Calu3 (cell line): ENCODE measurements at regions of chr4 and their contacts with region 1.

Region 1: GRCh38 chr4:106629268-106629625 is 260.7 kb upstream of the GIMD1 start:
- DNase-seq: no peak
- H3K4me3 Mint-ChIP-seq: no peak overlapping the region
- H3K27ac Mint-ChIP-seq: no peak overlapping the region
- H3K4me1 Mint-ChIP-seq: no peaks in the 10 kb centered on the region
- H3K27me3 Mint-ChIP-seq: no peaks in the 10 kb centered on the region
- CTCF ChIP-seq: no peak

Region 2: GRCh38 chr4:106659371-106659770 is 30.1 kb after region 1 on chr4:
- CTCF ChIA-PET with region 1: interaction called, 10 read pairs
- intact Hi-C with region 1: no loop called
- DNase-seq: no peak
- H3K4me3 Mint-ChIP-seq: no peak overlapping the region
- H3K27ac Mint-ChIP-seq: no peak overlapping the region
- H3K4me1 Mint-ChIP-seq: no peaks in the 10 kb centered on the region
- H3K27me3 Mint-ChIP-seq: no peaks in the 10 kb centered on the region
- CTCF ChIP-seq: no peak

Region 3: GRCh38 chr4:107330915-107331314 is 701.7 kb after region 1 on chr4:
- CTCF ChIA-PET with region 1: no interaction called
- intact Hi-C with region 1: no loop called
- DNase-seq: no peak
- H3K4me3 Mint-ChIP-seq: no peak overlapping the region
- H3K27ac Mint-ChIP-seq: no peak overlapping the region
- H3K4me1 Mint-ChIP-seq: peaks cover 11% of the 10 kb centered on the region
- H3K27me3 Mint-ChIP-seq: no peaks in the 10 kb centered on the region
- CTCF ChIP-seq: no peak

Region 4: GRCh38 chr4:107519053-107519452 is 889.8 kb after region 1 on chr4:
- CTCF ChIA-PET with region 1: no interaction called
- intact Hi-C with region 1: no loop called
- DNase-seq: peak; percentile 27
- H3K4me3 Mint-ChIP-seq: no peak overlapping the region
- H3K27ac Mint-ChIP-seq: no peak overlapping the region
- H3K4me1 Mint-ChIP-seq: no peaks in the 10 kb centered on the region
- H3K27me3 Mint-ChIP-seq: no peaks in the 10 kb centered on the region
- CTCF ChIP-seq: no peak